ENCODE measurements at regions of chr1 and their contacts with region 1.

Region 1: GRCh38 chr1:18926315-18927081 is 24.1 kb upstream of the ALDH4A1 start:
- DNase-seq: peak; percentile 94
- H3K4me3 Mint-ChIP-seq: peak overlapping the region; percentile 79
- H3K27ac Mint-ChIP-seq: peak overlapping the region; percentile 100
- H3K4me1 Mint-ChIP-seq: peaks cover 79% of the 10 kb centered on the region
- H3K27me3 Mint-ChIP-seq: no peaks in the 10 kb centered on the region

Region 2: GRCh38 chr1:18949686-18950400 is 23.3 kb after region 1 on chr1:
- CTCF ChIA-PET with region 1: interaction called, 52 read pairs
- POLR2A ChIA-PET with region 1: interaction called, 225 read pairs
- intact Hi-C with region 1: loop called (anchors 1 kb)
- DNase-seq: peak; percentile 49
- H3K4me3 Mint-ChIP-seq: peak overlapping the region; percentile 80
- H3K27ac Mint-ChIP-seq: peak overlapping the region; percentile 98
- H3K4me1 Mint-ChIP-seq: peaks cover 90% of the 10 kb centered on the region
- H3K27me3 Mint-ChIP-seq: no peaks in the 10 kb centered on the region

Region 3: DNA sequence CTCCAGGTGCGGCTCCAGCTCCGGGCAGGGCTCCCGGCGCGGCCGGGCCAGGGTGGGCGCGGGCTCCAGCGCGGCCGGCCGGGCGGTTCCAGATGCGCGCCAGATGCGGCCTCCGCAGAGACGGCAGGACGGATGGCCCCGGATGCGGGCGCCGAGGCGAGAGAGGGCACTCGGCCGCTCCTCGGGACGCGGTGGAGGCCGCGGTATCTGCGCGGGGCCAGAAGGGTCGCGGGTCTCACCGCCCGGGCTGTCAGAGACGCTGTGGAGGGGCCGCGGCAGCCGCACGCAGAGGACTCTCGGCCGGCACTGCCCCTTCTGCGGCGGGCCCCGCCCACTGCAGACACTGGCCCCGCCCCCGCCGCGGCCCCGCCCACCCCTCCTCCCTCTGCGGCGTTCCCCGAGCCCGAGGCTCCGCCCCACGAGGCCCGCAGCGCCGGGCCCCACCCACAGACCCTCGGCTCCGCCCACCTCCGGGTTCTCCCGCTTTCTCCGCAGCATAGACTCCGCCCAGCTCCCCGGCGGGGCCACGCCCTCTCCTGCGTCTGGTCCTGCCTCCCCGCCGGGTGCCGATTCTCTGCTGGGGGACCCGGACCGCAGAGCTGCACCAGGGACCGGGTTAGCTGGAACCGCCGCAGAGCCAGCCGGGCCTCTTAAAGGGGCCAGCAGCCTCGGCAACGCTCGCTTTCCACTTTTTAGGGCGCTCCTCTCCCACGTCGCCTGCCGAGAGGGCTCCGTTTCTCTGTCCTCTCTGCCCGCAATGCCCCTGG is 30.1 kb after region 1 on chr1 and contains the start of gene IFFO2:
- CTCF ChIA-PET with region 1: interaction called, 52 read pairs
- POLR2A ChIA-PET with region 1: interaction called, 225 read pairs
- intact Hi-C with region 1: loop called (anchors 1 kb)
- DNase-seq: peak; percentile 98
- H3K4me3 Mint-ChIP-seq: peak within 1 kb of the TSS; percentile 84
- H3K27ac Mint-ChIP-seq: peak within 1 kb of the TSS; percentile 71
- H3K4me1 Mint-ChIP-seq: peaks cover 44% of the 10 kb centered on the region
- H3K27me3 Mint-ChIP-seq: peaks cover 2% of the 10 kb centered on the region
- total RNA-seq, gene IFFO2: 40.4 to 42.0 TPM

Region 4: GRCh38 chr1:18965206-18966173 is 39.0 kb after region 1 on chr1:
- CTCF ChIA-PET with region 1: interaction called, 5 read pairs
- POLR2A ChIA-PET with region 1: interaction called, 7 read pairs
- intact Hi-C with region 1: loop called (anchors 5 kb)
- DNase-seq: peak; percentile 78
- H3K4me3 Mint-ChIP-seq: no peak overlapping the region
- H3K27ac Mint-ChIP-seq: peak overlapping the region; percentile 70
- H3K4me1 Mint-ChIP-seq: peaks cover 14% of the 10 kb centered on the region
- H3K27me3 Mint-ChIP-seq: peaks cover 3% of the 10 kb centered on the region

Region 5: DNA sequence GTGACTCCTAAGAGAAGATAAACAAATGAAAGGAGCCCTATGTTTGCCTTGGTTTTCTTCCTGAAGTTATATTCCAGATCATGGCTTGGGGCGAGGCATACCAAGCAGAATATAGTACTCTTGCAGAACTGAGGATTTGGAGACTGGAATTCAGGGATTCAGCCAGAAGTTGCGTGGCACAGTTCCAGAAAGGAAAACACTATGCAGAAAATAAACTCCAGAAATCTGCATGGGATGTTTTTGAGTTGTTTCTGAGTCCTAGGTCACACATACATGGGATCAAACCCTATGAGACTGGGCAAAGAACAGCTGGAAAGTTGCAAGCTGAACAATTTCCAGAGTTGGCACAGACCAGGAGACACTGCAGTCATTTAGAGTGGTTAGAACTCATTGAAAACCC is 72.9 kb after region 1 on chr1:
- CTCF ChIA-PET with region 1: no interaction called
- POLR2A ChIA-PET with region 1: no interaction called
- intact Hi-C with region 1: loop called (anchors 1 kb)
- DNase-seq: no peak
- H3K4me3 Mint-ChIP-seq: no peak overlapping the region
- H3K27ac Mint-ChIP-seq: no peak overlapping the region
- H3K4me1 Mint-ChIP-seq: peaks cover 36% of the 10 kb centered on the region
- H3K27me3 Mint-ChIP-seq: peaks cover 6% of the 10 kb centered on the region

Region 6: DNA sequence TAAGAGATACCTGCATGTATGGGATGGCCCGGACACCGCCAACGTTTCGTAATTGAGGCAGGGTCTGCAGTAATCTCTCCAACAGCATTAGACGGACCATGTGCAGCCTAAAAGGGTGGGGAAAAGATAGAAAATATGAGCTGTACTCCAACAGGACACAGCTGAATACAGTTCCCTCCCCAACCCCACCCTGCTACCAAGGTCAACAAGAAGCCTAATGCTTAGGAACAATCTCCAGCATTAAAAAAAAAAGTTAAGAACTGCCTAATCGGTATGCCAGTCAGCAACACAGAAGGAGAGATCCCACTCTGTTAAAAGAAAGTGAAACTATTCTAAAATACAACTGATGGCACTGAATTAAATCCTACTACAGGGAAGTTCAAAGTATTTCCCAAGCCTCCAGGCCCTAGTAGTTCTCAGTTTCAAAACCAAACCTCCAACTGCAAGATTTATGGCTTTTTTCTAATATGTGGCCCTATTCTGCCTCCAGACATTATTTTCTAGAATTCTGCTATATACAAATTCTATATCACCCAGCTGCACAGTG is 202.5 kb after region 1 on chr1:
- CTCF ChIA-PET with region 1: no interaction called
- POLR2A ChIA-PET with region 1: no interaction called
- intact Hi-C with region 1: no loop called
- DNase-seq: no peak
- H3K4me3 Mint-ChIP-seq: no peak overlapping the region
- H3K27ac Mint-ChIP-seq: no peak overlapping the region
- H3K4me1 Mint-ChIP-seq: peaks cover 22% of the 10 kb centered on the region
- H3K27me3 Mint-ChIP-seq: no peaks in the 10 kb centered on the region

Region 7: GRCh38 chr1:19251305-19252196 is 325.1 kb after region 1 on chr1 and contains the starts of genes EMC1 and MRTO4:
- CTCF ChIA-PET with region 1: no interaction called
- POLR2A ChIA-PET with region 1: interaction called, 3 read pairs
- intact Hi-C with region 1: loop called (anchors 10 kb)
- DNase-seq: peak; percentile 92
- H3K4me3 Mint-ChIP-seq: peak within 1 kb of the TSS; percentile 98
- H3K27ac Mint-ChIP-seq: peak within 1 kb of the TSS; percentile 95
- H3K4me1 Mint-ChIP-seq: peaks cover 43% of the 10 kb centered on the region
- H3K27me3 Mint-ChIP-seq: no peaks in the 10 kb centered on the region
- total RNA-seq, gene EMC1: 46.6 to 49.3 TPM
- total RNA-seq, gene MRTO4: 83.0 to 83.8 TPM